Psoas muscle (tissue), 8 donors: ENCODE measurements at regions of chrX and their contacts with region 1.

Region 1: GRCh38 chrX:46953597-46953996 is 41.4 kb downstream of the JADE3 start:
- DNase-seq: no peak
- ATAC-seq: no peak
- H3K4me3 ChIP-seq: no peak overlapping the region
- H3K27ac ChIP-seq: no peak overlapping the region
- H3K4me1 ChIP-seq: no peaks in the 10 kb centered on the region
- H3K27me3 ChIP-seq: peaks cover 0 to 4% (median 0%) of the 10 kb centered on the region in 3 donors
- CTCF ChIP-seq: no peak

Region 2: GRCh38 chrX:46836701-46837557 is 116.7 kb before region 1 on chrX and contains the start of gene RP2:
- intact Hi-C with region 1: no loop called
- DNase-seq: peak; percentile 88 to 94
- ATAC-seq: peak; percentile 99
- H3K4me3 ChIP-seq: peak within 1 kb of the TSS; percentile 84
- H3K27ac ChIP-seq: peak within 1 kb of the TSS; percentile 79
- H3K4me1 ChIP-seq: no peaks in the 10 kb centered on the region
- H3K27me3 ChIP-seq: no peaks in the 10 kb centered on the region
- CTCF ChIP-seq: no peak
- total RNA-seq, gene RP2: 1.6 to 2.4 (median 2.1) TPM

Region 3: GRCh38 chrX:46865281-46865680 is 88.3 kb before region 1 on chrX:
- intact Hi-C with region 1: loop called in 1 of 2 experiments (anchors 10 kb)
- DNase-seq: no peak
- ATAC-seq: no peak
- H3K4me3 ChIP-seq: no peak overlapping the region
- H3K27ac ChIP-seq: no peak overlapping the region
- H3K4me1 ChIP-seq: no peaks in the 10 kb centered on the region
- H3K27me3 ChIP-seq: no peaks in the 10 kb centered on the region
- CTCF ChIP-seq: no peak

Region 4: GRCh38 chrX:47078129-47079043 is 124.8 kb after region 1 on chrX and contains the start of gene RGN:
- intact Hi-C with region 1: no loop called
- DNase-seq: peak; percentile 35 to 66
- ATAC-seq: peak; percentile 43 to 89 (median 68)
- H3K4me3 ChIP-seq: peak within 1 kb of the TSS; percentile 70
- H3K27ac ChIP-seq: no peak within 1 kb of the TSS
- H3K4me1 ChIP-seq: no peaks in the 10 kb centered on the region
- H3K27me3 ChIP-seq: peaks cover 0 to 9% (median 0%) of the 10 kb centered on the region in 3 donors
- CTCF ChIP-seq: no peak
- total RNA-seq, gene RGN: 4.4 to 11.9 (median 5.3) TPM